ENCODE measurements at regions of chr4 and their contacts with region 1.

Region 1: GRCh38 chr4:170589597-170590191 is 499.9 kb upstream of the AADAT start:
- DNase-seq: no peak
- ATAC-seq: no peak
- H3K4me3 ChIP-seq: no peak overlapping the region
- H3K27ac ChIP-seq: no peak overlapping the region
- H3K4me1 ChIP-seq: no peaks in the 10 kb centered on the region
- H3K27me3 ChIP-seq: no peaks in the 10 kb centered on the region

Region 2: GRCh38 chr4:170040031-170040680 is 549.5 kb before region 1 on chr4:
- intact Hi-C with region 1: no loop called
- DNase-seq: no peak
- ATAC-seq: peak; percentile 29
- H3K4me3 ChIP-seq: no peak overlapping the region
- H3K27ac ChIP-seq: no peak overlapping the region
- H3K4me1 ChIP-seq: no peaks in the 10 kb centered on the region
- H3K27me3 ChIP-seq: no peaks in the 10 kb centered on the region

Region 3: DNA sequence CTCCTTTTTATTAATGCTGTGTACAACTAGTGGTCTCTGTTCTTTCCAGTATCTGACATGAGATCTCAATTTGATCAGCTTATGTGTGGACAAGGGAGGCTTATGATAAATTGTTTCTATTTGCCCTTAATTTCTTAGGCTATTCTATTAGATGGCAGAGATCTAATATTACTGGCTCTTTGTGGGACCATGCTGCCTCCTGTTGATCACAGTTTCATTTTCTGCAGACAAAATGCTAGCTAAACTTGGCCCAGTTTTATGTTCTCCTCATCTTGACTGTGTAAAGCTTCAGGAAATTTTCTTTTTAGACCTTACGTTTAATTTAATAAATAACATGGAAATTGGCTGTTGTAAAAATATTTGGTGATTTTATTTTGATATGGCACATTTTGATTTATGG is 127.2 kb after region 1 on chr4:
- intact Hi-C with region 1: loop called in 1 of 2 experiments (anchors 5 kb)
- DNase-seq: no peak
- ATAC-seq: no peak
- H3K4me3 ChIP-seq: no peak overlapping the region
- H3K27ac ChIP-seq: no peak overlapping the region
- H3K4me1 ChIP-seq: no peaks in the 10 kb centered on the region
- H3K27me3 ChIP-seq: no peaks in the 10 kb centered on the region